IMR-90 (cell line): ENCODE measurements at regions of chr6 and their contacts with region 1.

Region 1: GRCh38 chr6:28683944-28684538 is 158.4 kb downstream of the GPX5 start:
- DNase-seq: peak; percentile 34
- ATAC-seq: peak; percentile 87
- H3K4me3 ChIP-seq: no peak overlapping the region
- H3K27ac ChIP-seq: no peak overlapping the region
- H3K4me1 ChIP-seq: no peaks in the 10 kb centered on the region
- H3K27me3 ChIP-seq: peaks cover 2% of the 10 kb centered on the region; the same call in 1 of the 2 replicates
- CTCF ChIP-seq: peak; percentile 58
- POLR2A ChIP-seq: no peak
- RAD21 ChIP-seq: peak; percentile 62

Region 2: GRCh38 chr6:28383235-28384142 is 300.6 kb before region 1 on chr6:
- CTCF ChIA-PET with region 1: no interaction called
- POLR2A ChIA-PET with region 1: no interaction called
- dilution Hi-C with region 1: no loop called
- in situ Hi-C with region 1: no loop called
- intact Hi-C with region 1: loop called (anchors 1 kb)
- DNase-seq: peak; percentile 93
- ATAC-seq: peak; percentile 98
- H3K4me3 ChIP-seq: peak overlapping the region; percentile 48
- H3K27ac ChIP-seq: peak overlapping the region; percentile 49
- H3K4me1 ChIP-seq: no peaks in the 10 kb centered on the region
- H3K27me3 ChIP-seq: no peaks in the 10 kb centered on the region
- CTCF ChIP-seq: peak; percentile 51
- POLR2A ChIP-seq: peak; percentile 77
- RAD21 ChIP-seq: peak; percentile 46

Region 3: DNA sequence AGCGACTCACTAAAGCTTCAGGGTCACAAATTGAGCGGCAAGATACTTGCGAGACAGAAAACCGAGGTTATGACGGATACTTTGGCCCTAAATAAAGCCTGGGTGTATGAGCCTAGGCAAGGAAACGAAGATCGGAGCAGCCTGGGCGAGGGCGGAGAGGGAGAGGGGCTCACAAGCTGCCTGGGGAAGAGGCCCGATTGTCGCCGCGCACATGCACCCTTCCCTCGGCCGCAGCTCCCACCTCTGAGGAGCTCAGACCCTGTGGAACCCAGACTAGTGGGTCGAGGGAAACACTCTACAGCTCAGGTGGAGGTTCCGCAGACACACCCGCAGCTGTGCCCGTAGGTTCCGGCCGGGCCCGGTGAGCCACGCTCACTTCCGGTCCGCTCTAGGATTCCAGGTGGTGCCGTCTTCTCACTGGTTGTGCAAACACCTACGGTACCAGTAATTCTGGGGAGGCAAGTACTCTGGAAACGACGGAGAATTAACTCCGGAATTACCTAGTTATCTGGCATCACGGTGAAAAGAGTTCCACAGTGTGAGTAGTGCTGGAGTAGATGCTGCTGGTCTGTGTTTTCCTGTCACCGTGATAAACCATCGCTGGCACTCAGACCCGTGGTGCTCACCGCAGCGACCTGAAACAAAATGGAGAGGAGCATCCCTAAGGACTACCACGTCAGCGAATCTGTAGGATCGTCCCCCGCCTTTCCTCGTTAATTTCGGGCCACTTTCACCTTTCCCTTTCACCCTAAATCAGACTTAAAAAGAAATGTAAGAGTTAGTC is 96.9 kb before region 1 on chr6:
- CTCF ChIA-PET with region 1: no interaction called
- POLR2A ChIA-PET with region 1: no interaction called
- dilution Hi-C with region 1: no loop called
- in situ Hi-C with region 1: no loop called
- intact Hi-C with region 1: no loop called
- DNase-seq: no peak
- ATAC-seq: no peak
- H3K4me3 ChIP-seq: peak overlapping the region; percentile 40
- H3K27ac ChIP-seq: no peak overlapping the region
- H3K4me1 ChIP-seq: no peaks in the 10 kb centered on the region
- H3K27me3 ChIP-seq: peaks cover 2% of the 10 kb centered on the region; the same call in 1 of the 2 replicates
- CTCF ChIP-seq: no peak
- POLR2A ChIP-seq: no peak
- RAD21 ChIP-seq: no peak

Region 4: GRCh38 chr6:28895134-28895812 is 211.2 kb after region 1 on chr6:
- CTCF ChIA-PET with region 1: no interaction called
- POLR2A ChIA-PET with region 1: no interaction called
- dilution Hi-C with region 1: no loop called
- in situ Hi-C with region 1: no loop called
- intact Hi-C with region 1: no loop called
- DNase-seq: peak; percentile 95
- ATAC-seq: peak; percentile 78
- H3K4me3 ChIP-seq: peak overlapping the region; percentile 81
- H3K27ac ChIP-seq: peak overlapping the region; percentile 93
- H3K4me1 ChIP-seq: no peaks in the 10 kb centered on the region
- H3K27me3 ChIP-seq: no peaks in the 10 kb centered on the region
- CTCF ChIP-seq: no peak
- POLR2A ChIP-seq: peak; percentile 69; the same call in 1 of the 2 replicates
- RAD21 ChIP-seq: no peak

Region 5: GRCh38 chr6:29011276-29011734 is 327.3 kb after region 1 on chr6:
- CTCF ChIA-PET with region 1: no interaction called
- POLR2A ChIA-PET with region 1: no interaction called
- dilution Hi-C with region 1: no loop called
- in situ Hi-C with region 1: loop called (anchors 5 kb)
- intact Hi-C with region 1: no loop called
- DNase-seq: peak; percentile 51
- ATAC-seq: peak; percentile 94
- H3K4me3 ChIP-seq: peak overlapping the region; percentile 58
- H3K27ac ChIP-seq: no peak overlapping the region
- H3K4me1 ChIP-seq: no peaks in the 10 kb centered on the region
- H3K27me3 ChIP-seq: peaks cover 10% of the 10 kb centered on the region
- CTCF ChIP-seq: no peak
- POLR2A ChIP-seq: no peak
- RAD21 ChIP-seq: no peak

Region 6: DNA sequence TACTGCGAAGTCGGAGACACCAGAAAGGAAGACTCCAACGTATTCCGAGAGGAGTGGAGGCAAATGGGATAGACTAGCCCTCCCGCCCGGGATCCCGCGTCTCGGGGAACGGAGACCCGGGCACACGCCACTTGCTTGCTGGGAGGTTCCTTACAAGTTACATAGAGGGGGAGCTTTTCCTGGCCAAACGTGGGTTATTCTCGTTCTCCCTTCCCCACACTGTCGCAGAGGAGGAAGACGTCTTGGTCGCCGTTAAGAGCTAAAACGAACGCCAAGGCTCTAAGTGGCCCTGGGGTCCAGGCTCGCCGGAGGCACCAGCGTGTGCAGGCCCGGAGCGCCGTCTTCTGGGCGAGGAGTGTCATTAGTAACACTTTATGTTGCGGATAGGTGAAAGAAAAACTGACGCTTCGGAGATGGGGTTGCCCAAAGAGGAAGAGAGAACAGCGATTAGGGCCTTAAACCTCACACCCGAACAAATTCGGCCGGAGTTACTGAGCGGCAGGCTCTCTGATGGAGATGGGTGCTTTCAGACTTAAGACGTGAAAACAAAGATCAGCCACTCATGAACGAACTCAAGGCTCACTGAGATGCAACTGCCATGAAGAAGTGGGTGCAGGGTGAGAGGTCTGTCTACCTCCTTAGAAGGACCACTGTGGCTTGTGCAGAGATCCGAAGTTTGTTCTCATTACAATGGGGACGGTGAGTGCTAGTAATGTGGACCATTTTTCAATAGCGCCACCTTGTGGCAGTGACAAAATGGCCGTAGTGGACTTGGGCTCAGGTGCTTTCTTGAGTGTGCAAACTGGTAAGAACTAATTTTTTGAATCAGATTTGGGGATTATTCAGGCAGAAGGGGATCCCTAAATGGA is 332.8 kb after region 1 on chr6:
- CTCF ChIA-PET with region 1: no interaction called
- POLR2A ChIA-PET with region 1: no interaction called
- dilution Hi-C with region 1: no loop called
- in situ Hi-C with region 1: loop called (anchors 5 kb)
- intact Hi-C with region 1: loop called (anchors 1 kb)
- DNase-seq: peak; percentile 76
- ATAC-seq: peak; percentile 97
- H3K4me3 ChIP-seq: peak overlapping the region; percentile 64
- H3K27ac ChIP-seq: no peak overlapping the region; the same call in 1 of the 2 replicates
- H3K4me1 ChIP-seq: no peaks in the 10 kb centered on the region
- H3K27me3 ChIP-seq: peaks cover 10% of the 10 kb centered on the region
- CTCF ChIP-seq: peak; percentile 78
- POLR2A ChIP-seq: no peak
- RAD21 ChIP-seq: peak; percentile 73

Region 7: DNA sequence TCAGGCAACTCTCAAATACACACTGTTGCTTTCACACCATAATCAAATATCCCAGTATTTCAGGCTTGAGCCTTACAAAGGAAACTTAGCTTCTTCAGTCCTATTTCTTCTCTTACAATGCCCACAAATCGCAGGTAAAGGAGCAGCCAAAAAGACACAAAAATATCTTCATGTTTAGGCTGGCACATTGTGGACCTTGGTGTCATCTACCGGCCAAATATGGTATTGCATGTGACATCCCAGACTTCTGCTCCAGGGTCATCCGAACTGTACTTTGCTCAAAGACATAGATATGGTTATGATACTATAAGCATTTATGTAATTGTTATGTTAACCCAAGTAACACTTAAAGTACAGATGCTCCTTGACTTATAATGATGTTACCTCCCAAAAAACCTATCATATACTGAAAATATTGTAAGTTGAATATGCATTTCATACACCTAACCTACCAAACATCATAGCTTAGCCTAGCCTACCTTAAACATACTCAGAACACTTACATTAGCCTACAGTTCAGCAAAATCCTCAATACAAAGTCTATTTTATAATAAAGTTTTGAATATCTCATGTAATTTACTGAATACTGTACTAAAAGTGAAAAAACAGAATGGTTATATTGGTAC is 905.5 kb after region 1 on chr6:
- CTCF ChIA-PET with region 1: no interaction called
- POLR2A ChIA-PET with region 1: no interaction called
- dilution Hi-C with region 1: no loop called
- in situ Hi-C with region 1: loop called (anchors 10 kb)
- intact Hi-C with region 1: loop called (anchors 1 kb)
- DNase-seq: peak; percentile 47
- ATAC-seq: peak; percentile 94
- H3K4me3 ChIP-seq: no peak overlapping the region
- H3K27ac ChIP-seq: no peak overlapping the region
- H3K4me1 ChIP-seq: no peaks in the 10 kb centered on the region
- H3K27me3 ChIP-seq: no peaks in the 10 kb centered on the region
- CTCF ChIP-seq: peak; percentile 78
- POLR2A ChIP-seq: no peak
- RAD21 ChIP-seq: peak; percentile 78